Lower leg skin (tissue), 4 donors: ENCODE measurements at regions of chr20 and their contacts with region 1.

Region 1: DNA sequence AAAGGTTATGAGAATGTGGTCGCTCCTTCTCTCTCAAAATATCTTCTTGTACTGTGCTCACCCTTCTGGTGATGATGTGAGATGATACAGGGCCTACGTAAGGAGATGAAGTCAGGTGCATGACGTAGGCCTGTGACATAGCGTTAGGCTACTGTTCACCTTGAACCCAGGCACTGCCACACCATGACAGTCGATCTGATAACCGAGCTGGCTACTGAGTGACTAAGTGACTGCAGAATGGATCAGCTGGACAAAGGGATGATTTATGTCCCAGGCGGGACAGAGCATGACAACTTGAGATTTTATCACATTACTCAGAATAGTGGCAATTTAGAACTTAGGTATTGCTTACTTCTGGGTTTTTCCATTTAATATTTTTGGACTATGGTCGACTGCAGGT is 11.2 kb downstream of the SLC24A3 start:
- DNase-seq: no peak
- H3K4me3 ChIP-seq: no peak overlapping the region
- CTCF ChIP-seq: no peak
- POLR2A ChIP-seq: no peak

Region 2: DNA sequence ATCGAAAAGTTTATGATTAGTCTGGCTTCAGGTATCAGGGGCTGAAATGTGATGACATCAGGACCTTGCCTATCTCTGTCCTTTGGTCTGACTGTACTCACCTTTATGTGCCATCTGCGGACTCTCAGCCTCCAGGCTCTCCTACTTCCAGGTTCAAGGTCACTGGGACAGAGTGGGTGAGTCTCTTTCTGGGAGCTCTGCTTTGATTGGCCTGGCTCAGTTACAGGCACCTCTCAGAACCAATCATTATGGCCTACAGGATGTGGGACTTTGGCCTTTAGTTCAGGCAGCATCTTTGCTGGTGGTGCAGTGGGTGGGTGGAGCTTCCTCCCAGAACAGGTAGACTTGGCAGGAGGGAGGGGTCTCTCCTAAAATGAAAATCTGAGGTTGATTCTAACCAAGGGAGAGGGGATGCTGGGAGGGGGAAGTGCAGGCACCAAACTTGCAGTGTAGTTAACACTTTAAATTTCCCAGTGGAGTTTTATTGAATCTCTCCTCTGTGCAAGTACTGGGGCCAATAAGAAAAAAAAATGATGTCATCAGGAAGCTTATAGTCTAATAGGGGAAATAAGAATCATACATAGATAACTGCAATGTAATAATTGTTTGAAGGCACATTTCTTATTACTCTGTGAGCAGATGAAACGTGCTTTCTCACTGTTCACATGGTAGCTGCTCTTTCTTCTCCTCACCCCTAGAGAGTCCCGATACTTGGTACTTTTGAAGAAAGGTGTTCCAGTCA is 42.2 kb after region 1 on chr20:
- intact Hi-C with region 1: no loop called
- DNase-seq: peak in 1 of 2 donors; percentile 43
- H3K4me3 ChIP-seq: no peak overlapping the region
- CTCF ChIP-seq: no peak
- POLR2A ChIP-seq: no peak

Region 3: GRCh38 chr20:19351539-19351938 is 127.9 kb after region 1 on chr20:
- intact Hi-C with region 1: loop called (anchors 10 kb)
- DNase-seq: no peak
- H3K4me3 ChIP-seq: no peak overlapping the region
- CTCF ChIP-seq: no peak
- POLR2A ChIP-seq: no peak